Right cardiac atrium (tissue), 5 donors: ENCODE measurements at regions of chr6 and their contacts with region 1.

Region 1: GRCh38 chr6:45714741-45715507 is 300.7 kb downstream of the CLIC5 start:
- DNase-seq: no peak
- ATAC-seq: peak; percentile 93 to 94
- H3K4me3 ChIP-seq: no peak overlapping the region
- H3K27ac ChIP-seq: no peak overlapping the region
- H3K4me1 ChIP-seq: no peaks in the 10 kb centered on the region
- H3K27me3 ChIP-seq: no peaks in the 10 kb centered on the region

Region 2: DNA sequence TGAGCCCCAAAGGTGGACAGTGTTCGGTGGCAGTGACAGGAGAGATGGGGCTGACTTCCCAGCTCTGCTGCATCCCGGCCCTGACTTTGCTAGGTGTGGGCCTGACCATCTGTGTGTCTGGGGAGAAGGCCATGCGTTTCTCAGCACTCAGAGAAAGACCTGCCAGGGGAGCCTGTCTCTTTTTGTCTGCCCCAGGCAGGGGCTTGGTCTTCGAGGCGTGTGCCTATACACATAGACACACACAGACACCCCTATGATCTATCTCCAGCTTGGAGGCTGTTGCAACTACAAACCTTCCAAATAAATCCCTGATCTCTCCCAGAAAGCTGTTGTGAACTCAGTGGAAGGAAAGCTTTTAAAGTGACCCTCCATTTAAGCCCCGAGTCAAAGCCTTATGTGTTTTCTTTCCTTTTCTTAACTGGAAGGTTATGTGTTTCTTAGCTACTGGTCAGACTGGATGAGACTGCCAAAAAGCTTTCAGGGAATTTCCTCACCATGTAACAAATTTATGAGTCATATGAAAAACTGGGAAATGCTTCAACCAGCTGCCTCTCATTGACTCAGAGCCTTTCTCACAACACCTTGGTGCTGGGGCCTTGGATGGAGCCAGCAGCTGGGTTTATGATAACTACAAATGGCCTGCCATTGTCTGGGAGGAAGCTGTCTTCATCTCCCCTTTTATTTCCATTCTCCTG is 1224.9 kb before region 1 on chr6:
- intact Hi-C with region 1: loop called in 1 of 4 experiments (anchors 10 kb)
- DNase-seq: peak in 1 of 3 donors; percentile 36
- ATAC-seq: peak; percentile 84 to 87
- H3K4me3 ChIP-seq: no peak overlapping the region
- H3K27ac ChIP-seq: peak overlapping the region; percentile 25
- H3K4me1 ChIP-seq: no peaks in the 10 kb centered on the region
- H3K27me3 ChIP-seq: no peaks in the 10 kb centered on the region

Region 3: GRCh38 chr6:45421709-45422502 is 293.0 kb before region 1 on chr6:
- intact Hi-C with region 1: loop called in 1 of 4 experiments (anchors 10 kb)
- DNase-seq: peak; percentile 35 to 80 (median 78)
- ATAC-seq: peak; percentile 68 to 72
- H3K4me3 ChIP-seq: peak overlapping the region; percentile 64
- H3K27ac ChIP-seq: no peak overlapping the region
- H3K4me1 ChIP-seq: no peaks in the 10 kb centered on the region
- H3K27me3 ChIP-seq: no peaks in the 10 kb centered on the region

Region 4: DNA sequence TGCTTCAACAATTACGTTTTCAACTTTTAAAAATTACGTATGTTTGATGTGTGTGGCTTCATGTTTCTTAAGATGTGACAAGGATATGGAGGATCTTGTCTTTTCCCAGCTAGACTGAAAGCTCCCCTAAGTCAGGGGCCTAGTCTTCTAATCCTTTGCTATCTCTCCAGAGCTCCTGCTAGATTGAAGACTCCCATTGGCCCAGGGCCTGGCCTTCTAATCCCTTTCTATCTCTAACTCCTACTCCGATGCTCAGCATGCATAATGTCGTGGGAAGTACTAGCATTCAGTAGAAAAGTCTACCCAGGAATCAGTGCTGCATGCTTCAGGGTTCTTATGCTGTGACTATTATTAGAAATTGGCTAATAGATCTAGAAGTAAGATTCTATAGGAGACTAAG is 192.4 kb before region 1 on chr6:
- intact Hi-C with region 1: no loop called
- DNase-seq: no peak
- ATAC-seq: no peak
- H3K4me3 ChIP-seq: no peak overlapping the region
- H3K27ac ChIP-seq: no peak overlapping the region
- H3K4me1 ChIP-seq: no peaks in the 10 kb centered on the region
- H3K27me3 ChIP-seq: no peaks in the 10 kb centered on the region